ENCODE measurements at regions of chr11 and their contacts with region 1.

Region 1: DNA sequence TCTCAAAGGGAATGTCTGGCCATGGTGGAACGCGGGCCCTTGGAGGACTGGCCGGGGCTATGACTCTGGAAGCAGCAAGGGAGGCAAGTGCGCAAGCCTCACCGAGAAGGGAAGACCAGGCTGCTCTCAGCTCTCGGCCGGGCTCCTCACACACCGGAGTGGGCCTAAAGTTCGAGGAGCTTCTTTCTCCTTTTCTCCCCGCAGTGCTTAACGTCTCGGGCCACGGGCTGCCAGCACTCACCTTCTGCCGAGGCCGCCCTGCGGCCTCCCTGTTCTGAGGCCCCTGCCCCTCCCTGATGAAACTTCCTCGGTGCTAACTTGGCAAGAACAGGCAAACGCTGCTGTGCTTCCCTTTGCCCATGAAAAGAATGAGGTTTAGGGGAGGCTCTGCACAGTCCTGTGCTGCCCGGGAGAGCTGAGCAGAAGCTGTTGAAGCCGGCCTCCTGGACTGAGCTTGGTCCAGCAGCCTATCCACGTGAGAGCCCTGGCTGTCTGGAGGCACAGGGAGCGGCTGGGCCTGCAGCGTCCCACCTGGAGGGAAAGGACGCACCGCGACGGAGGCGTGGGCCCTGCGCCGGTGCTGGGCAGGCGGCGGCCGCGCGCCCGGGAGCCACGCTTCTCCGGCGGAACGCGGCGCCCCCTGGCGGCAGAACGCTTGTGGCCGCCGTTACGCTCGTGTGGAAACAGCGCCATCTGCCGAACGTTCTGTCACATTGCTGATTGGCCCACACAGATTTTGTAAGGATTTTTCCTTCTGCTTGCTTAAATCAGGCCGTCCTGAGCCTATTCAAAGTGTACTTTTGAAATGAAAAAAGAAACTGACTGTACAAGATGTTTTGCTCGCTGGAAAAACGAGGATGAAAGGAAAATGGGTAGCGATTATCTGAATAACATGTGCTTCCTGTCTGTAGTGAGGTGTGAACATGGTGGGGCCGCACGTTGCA is 65.0 kb upstream of the TMEM45B start:
- DNase-seq: peak; percentile 67
- H3K4me3 ChIP-seq: peak overlapping the region; percentile 10 to 12
- H3K27ac ChIP-seq: no peak overlapping the region
- H3K4me1 ChIP-seq: no peaks in the 10 kb centered on the region
- H3K27me3 ChIP-seq: no peaks in the 10 kb centered on the region
- CTCF ChIP-seq: peak; percentile 99 to 100 (median 100)
- POLR2A ChIP-seq: peak; percentile 10

Region 2: DNA sequence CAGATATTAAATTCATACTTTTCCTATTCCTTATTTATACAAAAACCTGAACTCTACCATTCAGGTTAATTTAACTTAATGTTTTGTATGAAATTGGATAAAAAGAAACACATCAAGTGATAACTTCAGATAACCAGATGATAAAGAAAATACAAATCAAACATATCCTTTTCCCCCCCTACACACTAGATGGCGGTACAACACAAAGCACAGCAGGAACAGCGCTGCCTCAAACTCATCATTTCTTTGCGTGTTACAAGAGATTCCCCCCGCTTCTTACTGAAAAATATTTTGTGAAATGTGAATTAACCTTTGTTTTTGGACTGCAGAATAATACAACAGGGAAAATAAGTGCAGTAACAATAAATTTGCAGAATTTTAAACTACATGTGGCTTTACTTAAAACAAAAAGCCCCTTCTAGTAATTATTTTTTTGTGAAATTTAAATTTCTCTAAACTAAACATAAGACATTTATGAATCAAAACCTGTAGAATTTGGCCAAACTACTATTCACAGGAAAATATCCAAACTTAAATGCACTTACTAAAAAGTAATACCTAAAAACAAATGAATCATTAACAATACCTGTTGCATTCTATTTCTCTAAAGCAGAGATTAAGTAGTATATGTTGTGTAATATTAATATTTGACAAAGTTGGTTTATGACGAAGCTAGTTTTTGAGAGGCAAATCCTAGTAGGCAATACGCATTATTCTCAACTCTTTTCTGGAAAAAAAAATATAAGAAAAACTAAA is 632.8 kb before region 1 on chr11:
- intact Hi-C with region 1: loop called (anchors 5 kb)
- DNase-seq: peak; percentile 51
- H3K4me3 ChIP-seq: no peak overlapping the region
- H3K27ac ChIP-seq: no peak overlapping the region
- H3K4me1 ChIP-seq: no peaks in the 10 kb centered on the region
- H3K27me3 ChIP-seq: no peaks in the 10 kb centered on the region
- CTCF ChIP-seq: peak; percentile 32 to 85 (median 82)
- POLR2A ChIP-seq: no peak

Region 3: GRCh38 chr11:129374993-129375750 is 375.4 kb before region 1 on chr11:
- intact Hi-C with region 1: loop called (anchors 5 kb)
- DNase-seq: peak; percentile 43
- H3K4me3 ChIP-seq: peak overlapping the region; percentile 24 to 46
- H3K27ac ChIP-seq: peak overlapping the region in 1 of 2 donors; percentile 18
- H3K4me1 ChIP-seq: peaks cover 4% of the 10 kb centered on the region
- H3K27me3 ChIP-seq: peaks cover 7% of the 10 kb centered on the region
- CTCF ChIP-seq: no peak
- POLR2A ChIP-seq: peak; percentile 25